Motor neuron (in vitro differentiated cells): ENCODE measurements at regions of chr5 and their contacts with region 1.

Region 1: DNA sequence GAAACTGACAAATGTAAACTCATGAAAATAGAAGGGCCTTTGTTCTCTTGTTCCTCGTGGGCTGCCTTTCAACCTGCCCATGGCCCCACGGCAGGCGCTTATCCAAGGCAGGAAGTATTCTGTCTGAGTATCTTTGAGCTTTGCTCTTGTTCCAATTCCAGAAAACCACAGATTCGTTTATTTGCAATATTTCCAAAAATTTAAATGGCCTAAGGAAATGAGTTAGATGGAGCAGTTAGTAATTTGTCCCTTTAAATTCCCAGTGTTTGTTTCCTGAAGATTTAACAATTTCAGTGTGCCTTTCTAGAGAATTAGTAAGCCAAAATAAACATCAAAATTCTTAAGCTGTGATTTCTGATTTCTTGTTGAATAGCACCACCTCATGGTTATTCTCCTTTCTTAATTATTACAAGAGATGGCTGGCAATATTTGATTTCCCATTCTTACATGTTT is 299.4 kb upstream of the RASA1 start:
- ATAC-seq: peak in 4 of 8 experiments; percentile 35 to 55 (median 46)
- H3K4me3 ChIP-seq: no peak overlapping the region
- H3K27ac ChIP-seq: no peak overlapping the region
- H3K4me1 ChIP-seq: no peaks in the 10 kb centered on the region

Region 2: GRCh38 chr5:86679529-86679928 is 288.8 kb before region 1 on chr5:
- in situ Hi-C with region 1: loop called in 1 of 9 experiments (anchors 25 kb)
- ATAC-seq: peak; percentile 76 to 92 (median 86)
- H3K4me3 ChIP-seq: no peak overlapping the region
- H3K27ac ChIP-seq: no peak overlapping the region
- H3K4me1 ChIP-seq: peaks cover 0 to 3% of the 10 kb centered on the region in 2 donors